Activated CD8-positive, alpha-beta T cell treated with anti-CD3 and anti-CD28 coated beads for 36 hours (primary cell): ENCODE measurements at regions of chr5 and their contacts with region 1.

Region 1: DNA sequence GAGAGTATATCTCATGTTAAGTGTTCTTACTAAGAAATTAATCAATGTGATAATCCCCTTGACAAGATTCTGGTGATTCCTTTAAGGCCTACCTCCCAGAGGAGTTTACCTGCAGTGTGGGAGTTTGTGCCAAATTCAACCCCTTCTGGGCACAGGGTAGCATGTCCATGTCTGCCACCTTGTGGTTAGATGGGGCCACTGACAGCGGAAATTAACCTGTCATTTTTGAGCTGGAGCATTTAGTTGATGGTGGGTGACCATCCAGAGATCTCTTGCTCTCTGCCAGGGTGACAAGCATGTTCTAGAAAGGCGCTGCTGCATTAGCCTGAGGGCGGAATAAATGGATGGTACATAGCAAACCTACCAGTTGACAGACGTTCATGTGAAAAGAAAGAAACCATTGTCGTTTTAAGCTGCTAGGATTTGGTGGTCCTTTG is 132.2 kb downstream of the FBXO4 start:
- DNase-seq: peak; percentile 72
- ATAC-seq: peak; percentile 90
- H3K4me3 Mint-ChIP-seq: no peak overlapping the region
- H3K27ac Mint-ChIP-seq: no peak overlapping the region
- H3K4me1 Mint-ChIP-seq: no peaks in the 10 kb centered on the region
- H3K27me3 Mint-ChIP-seq: peaks cover 7% of the 10 kb centered on the region
- CTCF ChIP-seq: peak; percentile 60

Region 2: DNA sequence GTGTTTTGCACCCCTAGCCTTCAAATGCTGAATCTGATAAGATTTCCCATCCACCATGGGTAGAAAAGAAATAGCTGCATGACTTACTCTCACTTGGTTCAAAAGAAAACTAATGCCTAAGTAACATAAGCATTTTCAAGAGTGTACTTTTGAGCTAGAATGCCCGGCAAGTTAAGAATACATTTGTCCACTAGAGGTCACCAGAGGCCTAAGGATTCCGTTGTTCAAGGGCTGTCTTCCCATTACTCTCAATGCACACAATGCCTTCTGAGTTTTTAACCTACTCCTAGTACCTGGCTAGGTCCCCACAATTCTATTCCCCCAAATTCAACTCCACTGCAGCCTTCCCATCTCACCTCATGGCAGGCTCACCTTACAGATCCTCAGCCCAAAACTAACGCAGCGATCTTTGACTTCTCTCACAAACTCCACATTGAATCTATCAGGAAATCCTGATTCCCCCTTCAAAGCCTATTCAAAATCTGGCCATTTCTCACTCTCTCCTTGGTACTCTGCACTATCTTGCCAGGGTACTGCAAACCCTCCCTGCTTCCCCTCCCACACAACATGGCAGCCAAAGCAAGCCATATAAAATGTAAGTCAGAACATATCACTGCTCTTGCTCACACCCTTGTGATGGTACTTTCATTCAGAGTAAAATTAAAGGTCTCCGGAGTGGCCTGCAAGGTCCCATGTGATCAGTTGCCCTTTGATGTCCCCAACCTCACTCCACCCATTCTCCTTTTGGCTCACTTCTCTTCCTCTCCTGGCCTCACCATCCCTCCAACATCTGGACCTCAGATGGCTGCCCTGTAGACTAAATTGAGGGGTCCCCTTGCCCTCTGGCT is 200.4 kb before region 1 on chr5:
- CTCF ChIA-PET with region 1: interaction called, 122 read pairs
- POLR2A ChIA-PET with region 1: no interaction called
- intact Hi-C with region 1: loop called (anchors 2 kb)
- DNase-seq: peak; percentile 58
- ATAC-seq: peak; percentile 76
- H3K4me3 Mint-ChIP-seq: no peak overlapping the region
- H3K27ac Mint-ChIP-seq: no peak overlapping the region
- H3K4me1 Mint-ChIP-seq: peaks cover 25% of the 10 kb centered on the region
- H3K27me3 Mint-ChIP-seq: no peaks in the 10 kb centered on the region
- CTCF ChIP-seq: peak; percentile 75

Region 3: DNA sequence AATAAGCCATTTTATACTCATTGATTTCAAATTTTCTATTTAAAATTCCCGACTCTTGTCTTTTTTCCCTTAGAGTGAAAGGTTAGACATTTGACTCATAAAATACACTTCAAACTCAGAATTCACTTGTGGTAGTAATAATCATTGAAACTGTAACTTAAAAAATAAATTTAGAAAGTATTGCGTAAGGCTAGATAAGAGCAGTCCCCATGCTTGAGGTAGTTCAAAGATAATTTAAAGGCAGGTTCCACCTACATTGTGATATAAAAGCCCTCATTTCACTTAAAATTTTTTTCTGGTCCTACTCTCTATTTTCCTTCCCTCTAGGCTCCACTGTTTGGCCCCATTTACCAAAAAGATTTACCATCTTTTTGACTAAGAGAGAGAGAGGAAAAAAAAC is 71.3 kb before region 1 on chr5:
- CTCF ChIA-PET with region 1: no interaction called
- POLR2A ChIA-PET with region 1: no interaction called
- intact Hi-C with region 1: no loop called
- DNase-seq: no peak
- ATAC-seq: no peak
- H3K4me3 Mint-ChIP-seq: no peak overlapping the region
- H3K27ac Mint-ChIP-seq: no peak overlapping the region
- H3K4me1 Mint-ChIP-seq: no peaks in the 10 kb centered on the region
- H3K27me3 Mint-ChIP-seq: peaks cover 21% of the 10 kb centered on the region
- CTCF ChIP-seq: no peak

Region 4: DNA sequence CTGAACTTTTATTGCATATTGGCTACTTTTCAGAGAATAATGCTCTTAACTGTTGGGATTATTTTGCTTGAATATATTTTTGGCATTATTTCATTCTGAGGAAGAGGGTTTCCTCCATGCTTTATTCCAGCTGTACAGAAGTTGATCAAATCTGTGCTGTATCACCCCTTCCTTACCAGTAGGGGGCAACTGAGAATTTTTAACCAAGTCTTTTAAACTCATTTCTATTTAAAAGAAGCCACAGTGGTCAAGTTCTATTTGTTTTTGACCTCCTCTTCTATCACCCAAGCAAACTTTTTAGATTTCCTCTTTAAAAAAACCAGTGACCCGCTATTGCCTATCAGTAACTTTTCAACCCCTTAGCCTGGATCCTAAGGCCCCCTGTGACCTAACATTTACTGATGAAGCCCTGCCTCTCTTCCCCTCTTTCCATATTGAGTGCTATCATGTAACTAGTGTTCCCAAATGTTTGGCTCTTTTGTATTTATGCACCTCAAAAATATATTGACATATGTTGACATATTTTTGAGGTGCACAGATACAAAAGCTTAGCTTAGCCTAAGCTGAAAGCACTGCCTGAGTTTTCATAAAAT is 51.6 kb before region 1 on chr5:
- CTCF ChIA-PET with region 1: interaction called, 20 read pairs
- POLR2A ChIA-PET with region 1: no interaction called
- intact Hi-C with region 1: no loop called
- DNase-seq: no peak
- ATAC-seq: peak; percentile 51
- H3K4me3 Mint-ChIP-seq: no peak overlapping the region
- H3K27ac Mint-ChIP-seq: no peak overlapping the region
- H3K4me1 Mint-ChIP-seq: no peaks in the 10 kb centered on the region
- H3K27me3 Mint-ChIP-seq: peaks cover 5% of the 10 kb centered on the region
- CTCF ChIP-seq: peak; percentile 73

Region 5: DNA sequence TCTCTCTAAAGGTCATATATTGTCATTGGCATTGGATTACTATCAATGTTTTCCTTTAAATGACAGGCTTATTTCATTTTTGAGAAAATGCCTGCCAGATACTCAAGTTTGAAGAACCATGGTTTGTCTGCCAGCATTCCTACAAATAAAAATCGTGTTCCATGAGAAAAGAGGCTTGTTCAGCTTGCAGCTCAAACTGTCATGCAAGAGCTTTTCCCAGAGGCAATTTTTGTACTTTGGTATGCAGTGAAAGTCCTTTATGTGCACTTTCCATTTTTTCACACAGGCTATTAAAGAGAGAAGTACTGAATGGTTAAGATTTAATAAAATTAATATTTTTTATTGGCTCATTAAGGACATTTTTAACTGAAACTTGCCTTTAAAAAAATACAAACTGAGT is 21.7 kb before region 1 on chr5:
- CTCF ChIA-PET with region 1: interaction called, 10 read pairs
- POLR2A ChIA-PET with region 1: interaction called, 3 read pairs
- intact Hi-C with region 1: no loop called
- DNase-seq: no peak
- ATAC-seq: no peak
- H3K4me3 Mint-ChIP-seq: no peak overlapping the region
- H3K27ac Mint-ChIP-seq: no peak overlapping the region
- H3K4me1 Mint-ChIP-seq: no peaks in the 10 kb centered on the region
- H3K27me3 Mint-ChIP-seq: peaks cover 18% of the 10 kb centered on the region
- CTCF ChIP-seq: no peak

Region 6: GRCh38 chr5:42043400-42043799 is 13.9 kb before region 1 on chr5:
- CTCF ChIA-PET with region 1: interaction called, 53 read pairs
- POLR2A ChIA-PET with region 1: no interaction called
- intact Hi-C with region 1: no loop called
- DNase-seq: no peak
- ATAC-seq: no peak
- H3K4me3 Mint-ChIP-seq: no peak overlapping the region
- H3K27ac Mint-ChIP-seq: no peak overlapping the region
- H3K4me1 Mint-ChIP-seq: no peaks in the 10 kb centered on the region
- H3K27me3 Mint-ChIP-seq: peaks cover 23% of the 10 kb centered on the region
- CTCF ChIP-seq: no peak

Region 7: GRCh38 chr5:42429694-42430093 is 372.4 kb after region 1 on chr5:
- CTCF ChIA-PET with region 1: no interaction called
- POLR2A ChIA-PET with region 1: no interaction called
- intact Hi-C with region 1: no loop called
- DNase-seq: no peak
- ATAC-seq: no peak
- H3K4me3 Mint-ChIP-seq: no peak overlapping the region
- H3K27ac Mint-ChIP-seq: no peak overlapping the region
- H3K4me1 Mint-ChIP-seq: no peaks in the 10 kb centered on the region
- H3K27me3 Mint-ChIP-seq: peaks cover 10% of the 10 kb centered on the region
- CTCF ChIP-seq: no peak